MCF 10A (cell line): ENCODE measurements at regions of chr22 and their contacts with region 1.

Region 1: DNA sequence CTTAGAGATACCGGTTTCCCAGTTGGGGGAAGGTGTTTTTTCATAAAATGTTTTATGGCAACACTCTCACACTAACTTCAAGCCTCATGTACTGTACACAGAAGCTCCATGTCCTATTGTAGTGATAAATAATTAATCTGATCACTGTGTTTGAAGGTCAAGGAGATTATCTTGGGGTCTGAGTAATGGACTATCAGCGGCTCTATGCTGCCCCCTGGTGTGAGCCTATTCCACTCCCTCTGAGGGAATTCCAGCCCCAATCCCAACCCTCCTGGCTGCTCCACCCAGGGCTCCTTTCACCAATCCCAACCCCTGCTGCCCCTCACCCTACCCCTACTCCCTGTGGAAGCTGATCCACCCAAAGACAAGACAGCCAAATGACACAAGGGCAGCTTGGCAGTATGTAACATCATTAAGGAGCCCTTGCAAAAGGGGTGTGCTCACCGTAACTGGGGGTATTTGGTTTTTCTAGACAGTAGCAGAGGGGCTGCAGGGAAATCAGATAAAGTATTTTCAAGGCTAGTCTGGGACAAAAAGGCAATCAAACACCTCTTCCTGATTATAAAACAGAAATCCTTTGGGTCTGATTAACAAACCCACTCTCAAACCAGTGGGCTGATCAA is 22.3 kb downstream of the HPS4 start:
- DNase-seq: peak; percentile 61
- H3K4me3 Mint-ChIP-seq: no peak overlapping the region
- H3K27ac Mint-ChIP-seq: no peak overlapping the region
- H3K4me1 Mint-ChIP-seq: peaks cover 7% of the 10 kb centered on the region
- H3K27me3 Mint-ChIP-seq: no peaks in the 10 kb centered on the region
- CTCF ChIP-seq: peak; percentile 68

Region 2: DNA sequence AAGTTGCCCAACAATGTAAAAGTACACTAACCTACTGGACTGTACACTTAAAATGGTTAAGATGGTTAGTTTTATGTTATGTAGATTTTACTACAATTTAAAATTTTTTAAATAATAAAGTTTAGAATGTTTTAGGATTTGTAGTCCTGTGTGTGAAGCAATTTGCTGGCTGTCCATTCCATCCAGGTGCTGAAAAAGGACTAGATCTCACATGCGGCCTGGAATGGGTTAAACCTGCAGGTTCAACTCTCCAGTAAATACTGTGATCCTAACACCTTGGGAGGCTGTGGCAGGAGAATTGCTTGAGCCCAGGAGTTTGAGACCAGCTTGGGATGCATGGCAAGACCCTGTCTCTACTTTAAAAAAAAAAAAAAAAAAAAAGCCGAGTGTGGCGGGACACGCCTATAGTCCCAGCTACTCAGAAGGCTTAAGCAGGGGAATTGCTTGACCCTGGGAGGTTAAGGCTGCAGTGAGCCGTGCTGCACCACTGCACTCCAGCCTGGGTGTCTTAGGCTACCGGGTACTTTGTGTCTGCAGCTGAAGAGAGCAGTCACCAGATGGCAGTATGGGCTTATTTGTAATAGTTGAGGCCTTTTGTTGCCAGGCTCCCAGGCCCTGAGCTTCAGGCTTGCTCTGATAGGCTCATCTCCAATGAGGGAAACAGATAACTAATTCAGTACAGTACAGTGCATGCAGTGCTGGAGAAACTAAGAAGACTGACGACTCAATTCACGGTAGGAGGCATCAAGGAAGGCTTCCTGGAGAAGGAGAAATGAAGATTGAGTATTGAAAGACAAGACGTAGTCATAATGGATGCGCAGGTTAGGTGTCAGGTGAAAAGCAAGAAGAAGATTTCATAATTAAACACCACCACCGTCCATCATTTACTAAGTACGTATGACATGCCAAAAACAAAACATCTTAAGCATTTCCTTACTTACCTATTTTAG is 97.0 kb before region 1 on chr22:
- CTCF ChIA-PET with region 1: interaction called, 57 read pairs
- POLR2A ChIA-PET with region 1: interaction called, 3 read pairs
- intact Hi-C with region 1: no loop called
- DNase-seq: peak; percentile 73
- H3K4me3 Mint-ChIP-seq: no peak overlapping the region
- H3K27ac Mint-ChIP-seq: no peak overlapping the region
- H3K4me1 Mint-ChIP-seq: peaks cover 10% of the 10 kb centered on the region
- H3K27me3 Mint-ChIP-seq: peaks cover 14% of the 10 kb centered on the region
- CTCF ChIP-seq: peak; percentile 51

Region 3: GRCh38 chr22:26398741-26399153 is 62.6 kb before region 1 on chr22:
- CTCF ChIA-PET with region 1: interaction called, 172 read pairs
- POLR2A ChIA-PET with region 1: interaction called, 6 read pairs
- intact Hi-C with region 1: loop called (anchors 1 kb)
- DNase-seq: peak; percentile 78
- H3K4me3 Mint-ChIP-seq: no peak overlapping the region
- H3K27ac Mint-ChIP-seq: no peak overlapping the region
- H3K4me1 Mint-ChIP-seq: peaks cover 5% of the 10 kb centered on the region
- H3K27me3 Mint-ChIP-seq: peaks cover 29% of the 10 kb centered on the region
- CTCF ChIP-seq: peak; percentile 81

Region 4: DNA sequence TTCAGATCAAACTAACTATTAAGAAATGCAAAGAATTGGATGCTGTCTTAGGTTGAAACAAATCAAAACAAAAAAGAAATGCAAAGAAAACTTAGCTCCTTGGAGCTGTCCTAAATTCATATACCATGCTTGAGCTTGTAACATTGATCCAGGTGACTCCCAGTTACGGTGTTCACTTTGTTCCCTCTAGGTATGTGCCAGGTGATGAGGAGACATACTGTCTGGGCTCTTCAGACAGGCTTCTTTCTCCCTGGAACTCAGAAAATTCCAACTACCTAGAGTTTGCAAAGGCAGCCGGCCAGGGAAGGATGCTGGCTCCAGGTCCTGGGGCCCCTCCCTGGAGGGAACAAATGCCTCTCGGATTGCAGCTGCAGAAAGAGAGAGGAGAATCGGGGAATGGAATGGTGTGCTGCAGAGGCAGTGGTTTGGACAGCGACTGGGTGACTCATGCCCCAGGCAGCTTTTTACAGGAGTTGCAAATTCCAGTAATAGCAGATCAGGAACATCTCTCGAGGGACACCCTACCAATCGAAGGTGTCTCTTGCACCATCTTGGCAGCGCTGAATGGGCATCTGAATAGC is 44.5 kb before region 1 on chr22:
- CTCF ChIA-PET with region 1: interaction called, 28 read pairs
- POLR2A ChIA-PET with region 1: interaction called, 6 read pairs
- intact Hi-C with region 1: loop called (anchors 5 kb)
- DNase-seq: peak; percentile 78
- H3K4me3 Mint-ChIP-seq: no peak overlapping the region
- H3K27ac Mint-ChIP-seq: no peak overlapping the region
- H3K4me1 Mint-ChIP-seq: peaks cover 27% of the 10 kb centered on the region
- H3K27me3 Mint-ChIP-seq: no peaks in the 10 kb centered on the region
- CTCF ChIP-seq: no peak

Region 5: GRCh38 chr22:26436903-26437515 is 24.3 kb before region 1 on chr22:
- CTCF ChIA-PET with region 1: interaction called, 40 read pairs
- POLR2A ChIA-PET with region 1: no interaction called
- intact Hi-C with region 1: no loop called
- DNase-seq: no peak
- H3K4me3 Mint-ChIP-seq: no peak overlapping the region
- H3K27ac Mint-ChIP-seq: no peak overlapping the region
- H3K4me1 Mint-ChIP-seq: no peaks in the 10 kb centered on the region
- H3K27me3 Mint-ChIP-seq: no peaks in the 10 kb centered on the region
- CTCF ChIP-seq: no peak

Region 6: DNA sequence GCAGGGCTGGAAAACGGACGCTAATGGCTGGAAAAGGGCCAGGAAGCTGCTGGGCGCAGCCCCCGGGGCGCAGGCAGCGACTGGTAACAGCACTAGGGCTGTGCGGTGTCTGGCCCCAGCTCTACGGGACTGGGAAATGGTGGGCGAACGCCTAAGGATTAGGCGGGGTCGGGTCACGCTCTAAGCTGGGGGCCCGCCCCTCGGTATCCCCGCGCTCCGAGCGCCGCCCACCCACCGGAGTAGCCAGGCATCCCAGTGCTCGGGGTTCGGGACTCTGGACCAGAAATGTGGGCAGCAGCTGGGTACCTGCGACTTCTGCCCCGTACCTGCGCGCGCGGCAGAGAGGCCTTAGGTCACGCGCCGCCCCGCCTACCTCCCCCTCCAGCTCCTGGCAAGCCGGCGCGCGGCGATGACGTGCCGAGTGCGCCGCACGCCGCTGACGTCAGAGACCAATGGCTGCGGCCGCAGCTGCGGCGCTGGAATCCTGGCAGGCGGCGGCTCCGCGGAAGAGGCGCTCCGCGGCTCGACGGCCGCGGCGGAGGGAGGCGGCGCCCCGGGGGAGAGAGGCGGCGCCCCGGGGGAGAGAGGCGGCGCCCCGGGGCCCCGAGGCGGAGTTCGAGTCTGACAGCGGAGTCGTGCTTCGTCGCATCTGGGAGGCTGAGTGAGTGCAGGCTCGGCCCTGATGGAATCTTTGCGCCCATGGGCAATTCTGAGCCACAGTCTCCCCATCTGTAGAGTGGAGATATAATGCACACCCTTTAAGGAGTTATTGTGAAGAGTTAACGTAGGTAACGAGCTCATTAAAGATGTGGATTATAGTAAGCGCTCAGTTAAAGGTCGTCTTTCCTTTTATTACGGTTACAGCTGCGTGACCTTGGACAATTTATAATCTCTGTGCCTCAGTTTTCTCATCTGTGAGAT is 22.4 kb after region 1 on chr22 and contains the starts of genes HPS4 and SRRD:
- CTCF ChIA-PET with region 1: interaction called, 15 read pairs
- POLR2A ChIA-PET with region 1: interaction called, 13 read pairs
- intact Hi-C with region 1: no loop called
- DNase-seq: peak; percentile 88
- H3K4me3 Mint-ChIP-seq: peak within 1 kb of the TSS; percentile 95
- H3K27ac Mint-ChIP-seq: peak within 1 kb of the TSS; percentile 99
- H3K4me1 Mint-ChIP-seq: peaks cover 51% of the 10 kb centered on the region
- H3K27me3 Mint-ChIP-seq: no peaks in the 10 kb centered on the region
- CTCF ChIP-seq: no peak
- total RNA-seq, gene HPS4: 35.6 and 38.3 TPM in 2 replicates
- total RNA-seq, gene SRRD: 22.4 and 27.9 TPM in 2 replicates

Region 7: DNA sequence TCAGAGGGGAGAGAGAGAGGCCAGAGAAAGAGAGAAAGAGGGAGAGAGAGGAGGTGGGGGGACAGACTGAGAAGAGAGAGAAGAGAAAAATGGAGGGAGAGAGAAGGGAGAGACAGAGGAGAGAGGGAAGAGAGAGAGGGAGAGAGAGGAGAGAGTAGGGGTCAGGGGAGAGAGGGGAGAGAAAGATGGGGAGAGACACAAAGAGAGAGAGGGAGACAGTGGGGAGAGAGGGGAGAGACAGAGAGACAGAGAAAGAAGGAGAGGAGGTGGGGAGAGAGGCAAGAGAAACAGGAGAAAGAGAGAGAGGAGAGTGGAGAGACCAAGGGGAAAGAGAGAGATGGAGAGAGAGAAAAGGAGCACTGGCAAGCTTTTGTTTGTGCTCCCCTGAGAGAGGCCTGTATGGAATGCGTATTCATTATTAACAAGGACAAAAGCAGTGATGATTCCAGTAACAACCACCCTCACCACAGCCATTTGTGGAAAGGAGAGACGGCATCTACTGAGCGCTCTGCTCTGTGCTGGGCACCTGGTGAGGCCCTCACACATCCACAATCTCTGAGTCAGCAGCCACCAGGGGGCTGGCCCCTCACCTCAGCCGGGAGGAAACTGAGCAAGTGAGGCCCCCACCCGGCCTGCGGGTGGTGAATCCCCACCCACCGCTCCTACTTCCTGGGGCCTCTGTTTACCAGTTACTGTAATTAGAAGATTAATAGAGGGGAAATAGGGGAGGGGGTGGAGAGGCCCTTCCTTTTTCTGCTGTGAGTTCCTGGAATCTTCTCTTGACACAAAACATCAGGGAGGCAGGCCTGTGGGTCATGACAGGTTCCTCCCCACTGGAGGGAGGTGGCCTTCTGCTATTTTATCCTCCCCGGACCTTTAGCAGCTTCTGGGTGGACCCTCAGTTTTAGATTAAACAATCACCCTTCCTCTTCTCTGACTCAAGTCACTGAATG is 181.4 kb after region 1 on chr22:
- CTCF ChIA-PET with region 1: no interaction called
- POLR2A ChIA-PET with region 1: no interaction called
- intact Hi-C with region 1: no loop called
- DNase-seq: no peak
- H3K4me3 Mint-ChIP-seq: no peak overlapping the region
- H3K27ac Mint-ChIP-seq: no peak overlapping the region
- H3K4me1 Mint-ChIP-seq: peaks cover 6% of the 10 kb centered on the region
- H3K27me3 Mint-ChIP-seq: peaks cover 45% of the 10 kb centered on the region
- CTCF ChIP-seq: no peak

Region 8: GRCh38 chr22:26672590-26673468 is 211.5 kb after region 1 on chr22:
- CTCF ChIA-PET with region 1: no interaction called
- POLR2A ChIA-PET with region 1: no interaction called
- intact Hi-C with region 1: no loop called
- DNase-seq: peak; percentile 94
- H3K4me3 Mint-ChIP-seq: peak overlapping the region; percentile 89
- H3K27ac Mint-ChIP-seq: peak overlapping the region; percentile 99
- H3K4me1 Mint-ChIP-seq: peaks cover 37% of the 10 kb centered on the region
- H3K27me3 Mint-ChIP-seq: no peaks in the 10 kb centered on the region
- CTCF ChIP-seq: peak; percentile 37